GM12878 (cell line): ENCODE measurements at regions of chr2 and their contacts with region 1.

Region 1: GRCh38 chr2:194271293-194271961 is 1385.6 kb upstream of the SLC39A10 start:
- DNase-seq: no peak
- ATAC-seq: peak; percentile 74
- H3K4me3 ChIP-seq: no peak overlapping the region
- H3K27ac ChIP-seq: no peak overlapping the region
- H3K4me1 ChIP-seq: no peaks in the 10 kb centered on the region
- H3K27me3 ChIP-seq: no peaks in the 10 kb centered on the region
- CTCF ChIP-seq: no peak
- EP300 ChIP-seq: no peak
- POLR2A ChIP-seq: no peak
- RAD21 ChIP-seq: no peak

Region 2: DNA sequence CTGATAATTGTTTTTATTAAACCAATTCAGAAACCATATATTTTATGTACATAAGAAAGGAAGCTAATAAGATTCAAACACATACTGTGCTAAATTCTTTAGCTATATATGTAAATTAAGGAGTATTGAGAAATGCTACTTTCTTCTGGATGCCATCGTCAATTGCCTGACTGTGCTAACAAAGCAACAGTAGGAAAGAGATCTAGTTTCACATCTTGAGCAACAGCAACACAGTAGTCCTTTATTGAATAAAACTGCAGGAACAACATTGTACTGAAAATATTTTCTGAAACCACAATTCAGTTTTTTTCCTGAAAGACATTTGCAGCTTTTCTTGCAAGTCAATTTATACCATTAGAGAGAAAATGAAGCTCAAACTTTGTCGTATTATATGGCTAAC is 19.3 kb before region 1 on chr2:
- CTCF ChIA-PET with region 1: no interaction called
- POLR2A ChIA-PET with region 1: interaction called, 3 read pairs
- RAD21 ChIA-PET with region 1: interaction called, 16 read pairs
- SMC1A ChIA-PET with region 1: interaction called, 5 read pairs
- in situ Hi-C with region 1: no loop called
- intact Hi-C with region 1: no loop called
- DNase-seq: no peak
- ATAC-seq: no peak
- H3K4me3 ChIP-seq: no peak overlapping the region
- H3K27ac ChIP-seq: no peak overlapping the region
- H3K4me1 ChIP-seq: no peaks in the 10 kb centered on the region; the same call in 1 of the 2 replicates
- H3K27me3 ChIP-seq: no peaks in the 10 kb centered on the region
- CTCF ChIP-seq: no peak
- EP300 ChIP-seq: no peak
- POLR2A ChIP-seq: no peak
- RAD21 ChIP-seq: no peak

Region 3: DNA sequence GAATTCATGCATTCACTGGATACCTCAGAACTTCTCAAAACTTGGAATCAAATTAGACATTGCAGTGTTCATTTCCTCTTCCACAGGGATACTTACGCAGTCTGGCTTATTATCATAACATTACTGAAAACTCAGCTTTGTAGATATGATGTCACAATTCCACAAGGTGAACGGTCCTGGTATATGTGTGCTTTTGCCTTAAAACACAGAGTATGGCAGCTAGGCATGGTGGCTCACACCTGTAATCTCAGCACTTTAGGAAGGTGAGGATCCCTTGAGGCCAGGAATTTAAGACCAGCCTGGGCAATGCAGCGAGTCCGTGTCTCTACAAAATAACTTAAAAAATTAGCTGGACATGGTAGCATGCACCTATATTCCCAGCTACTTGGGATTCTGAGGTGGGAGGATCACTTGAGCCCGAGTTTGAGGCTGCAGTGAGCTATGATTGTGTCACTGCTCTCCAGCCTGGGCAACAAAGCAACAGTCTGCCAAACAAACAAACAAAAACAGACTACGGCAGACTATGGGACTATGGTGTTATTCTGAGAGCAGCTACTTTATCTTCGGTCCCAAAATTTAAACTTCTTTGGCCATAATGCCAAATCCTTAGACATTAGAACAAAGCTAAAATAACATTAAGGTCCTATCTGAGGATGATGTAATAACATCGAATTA is 193.7 kb after region 1 on chr2:
- CTCF ChIA-PET with region 1: no interaction called
- POLR2A ChIA-PET with region 1: no interaction called
- RAD21 ChIA-PET with region 1: no interaction called
- SMC1A ChIA-PET with region 1: no interaction called
- in situ Hi-C with region 1: no loop called
- intact Hi-C with region 1: no loop called
- DNase-seq: no peak
- ATAC-seq: no peak
- H3K4me3 ChIP-seq: no peak overlapping the region
- H3K27ac ChIP-seq: no peak overlapping the region
- H3K4me1 ChIP-seq: no peaks in the 10 kb centered on the region
- H3K27me3 ChIP-seq: no peaks in the 10 kb centered on the region
- CTCF ChIP-seq: no peak
- EP300 ChIP-seq: no peak
- POLR2A ChIP-seq: no peak
- RAD21 ChIP-seq: no peak